ENCODE measurements at regions of chr19 and their contacts with region 1.

Region 1: GRCh38 chr19:35352448-35353304 is 5.0 kb downstream of the FFAR1 start:
- DNase-seq: peak; percentile 56 to 76 (median 68)
- ATAC-seq: peak; percentile 74 to 91 (median 80)
- H3K4me3 ChIP-seq: no peak overlapping the region
- H3K27ac ChIP-seq: peak overlapping the region in 1 of 4 donors; percentile 33
- H3K4me1 ChIP-seq: peaks cover 0 to 3% (median 0%) of the 10 kb centered on the region in 3 donors
- H3K27me3 ChIP-seq: no peaks in the 10 kb centered on the region
- CTCF ChIP-seq: peak; percentile 51 to 76 (median 63)

Region 2: GRCh38 chr19:35295792-35296462 is 56.7 kb before region 1 on chr19:
- intact Hi-C with region 1: no loop called
- DNase-seq: no peak
- ATAC-seq: no peak
- H3K4me3 ChIP-seq: no peak overlapping the region
- H3K27ac ChIP-seq: no peak overlapping the region
- H3K4me1 ChIP-seq: no peaks in the 10 kb centered on the region
- H3K27me3 ChIP-seq: no peaks in the 10 kb centered on the region
- CTCF ChIP-seq: no peak

Region 3: DNA sequence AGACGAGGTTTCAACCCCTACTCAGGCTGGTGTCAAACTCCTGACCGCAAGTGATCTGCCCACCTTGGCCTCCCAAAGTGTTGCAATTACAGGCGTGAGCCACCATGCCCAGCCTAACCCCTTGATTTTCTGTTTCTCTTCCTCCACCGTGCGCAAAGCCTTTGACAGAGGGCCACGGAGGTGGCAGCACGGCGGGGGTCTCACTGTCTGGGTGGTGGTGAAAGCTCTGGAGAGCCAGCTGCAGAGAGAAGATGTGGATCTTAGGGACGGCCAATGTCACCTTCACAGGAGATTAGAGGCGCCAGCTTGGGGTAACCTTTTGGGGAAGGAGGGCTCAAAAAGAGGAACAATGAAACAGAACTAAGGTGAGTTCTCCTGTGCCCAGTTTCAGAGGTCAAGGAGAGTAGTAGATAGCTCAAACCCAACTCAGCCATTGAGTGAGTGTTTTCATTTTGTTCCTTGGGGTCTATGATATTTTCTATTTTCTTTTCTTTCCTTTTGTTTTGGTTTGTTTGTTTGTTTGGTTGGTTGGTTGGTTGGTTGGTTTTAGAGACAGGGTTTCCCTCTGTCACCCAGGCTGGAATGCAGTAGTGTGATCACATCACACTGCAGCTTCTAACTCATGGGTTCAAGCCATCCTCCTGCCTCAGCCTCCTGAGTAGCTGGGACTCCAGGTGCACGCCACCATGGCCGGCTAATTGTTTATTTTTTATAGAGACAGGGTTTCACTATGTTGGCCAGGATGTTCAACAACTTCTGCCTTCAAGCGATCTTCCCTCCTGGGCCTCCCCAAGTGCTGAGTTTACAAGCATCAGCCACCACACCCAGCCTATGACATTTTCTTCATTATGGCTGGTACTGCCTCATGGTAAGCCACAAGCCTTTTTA is 55.9 kb after region 1 on chr19:
- intact Hi-C with region 1: no loop called
- DNase-seq: no peak
- ATAC-seq: no peak
- H3K4me3 ChIP-seq: no peak overlapping the region
- H3K27ac ChIP-seq: no peak overlapping the region
- H3K4me1 ChIP-seq: no peaks in the 10 kb centered on the region
- H3K27me3 ChIP-seq: no peaks in the 10 kb centered on the region
- CTCF ChIP-seq: no peak

Region 4: GRCh38 chr19:35468637-35469036 is 116.0 kb after region 1 on chr19:
- intact Hi-C with region 1: loop called (anchors 2 to 10 kb)
- DNase-seq: peak; percentile 56 to 80 (median 70)
- ATAC-seq: peak; percentile 85 to 100 (median 98)
- H3K4me3 ChIP-seq: no peak overlapping the region
- H3K27ac ChIP-seq: no peak overlapping the region
- H3K4me1 ChIP-seq: no peaks in the 10 kb centered on the region
- H3K27me3 ChIP-seq: no peaks in the 10 kb centered on the region
- CTCF ChIP-seq: peak; percentile 42 to 76 (median 70)

Region 5: GRCh38 chr19:35495107-35496064 is 142.7 kb after region 1 on chr19:
- intact Hi-C with region 1: loop called in 1 of 3 experiments (anchors 5 kb)
- DNase-seq: peak; percentile 47 to 86 (median 76)
- ATAC-seq: peak; percentile 90 to 99 (median 96)
- H3K4me3 ChIP-seq: no peak overlapping the region
- H3K27ac ChIP-seq: no peak overlapping the region
- H3K4me1 ChIP-seq: no peaks in the 10 kb centered on the region
- H3K27me3 ChIP-seq: no peaks in the 10 kb centered on the region
- CTCF ChIP-seq: peak; percentile 98 to 99 (median 98)

Measured in pancreas (tissue), 10 donors.